ENCODE measurements at regions of chr17 and their contacts with region 1.

Region 1: DNA sequence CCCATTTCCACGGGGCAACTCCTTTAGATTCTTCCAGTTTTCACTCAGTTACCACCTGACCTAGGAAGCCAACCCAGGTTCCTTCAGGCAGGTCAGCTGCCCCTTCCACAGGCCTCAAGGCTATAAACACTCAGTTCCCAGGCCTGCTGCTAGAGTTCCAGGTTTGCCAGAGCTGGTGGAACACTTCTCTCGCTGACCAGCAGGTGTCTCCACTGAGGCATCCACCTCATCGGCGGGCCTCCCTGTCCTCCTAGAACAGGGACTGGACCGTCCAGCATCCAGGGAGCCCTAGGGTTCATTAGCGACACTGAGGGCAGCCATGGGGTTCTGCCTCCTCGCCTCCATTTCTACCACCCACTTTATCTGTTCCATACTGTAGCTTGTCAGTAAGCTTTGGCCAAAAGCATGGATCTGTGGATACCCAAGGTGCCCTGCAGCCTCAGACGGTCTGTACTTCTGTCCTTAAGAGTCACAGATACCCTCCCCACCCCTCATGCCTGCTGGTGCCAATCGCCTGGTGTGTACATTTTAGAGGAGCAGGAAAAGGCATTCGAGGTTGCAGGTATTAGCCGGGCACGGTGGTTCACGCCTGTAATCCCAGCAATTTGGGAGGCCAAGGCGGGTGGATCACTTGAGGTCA is 29.0 kb downstream of the PIMREG start:
- DNase-seq: peak; percentile 84
- ATAC-seq: peak; percentile 84
- H3K4me3 Mint-ChIP-seq: no peak overlapping the region
- H3K27ac Mint-ChIP-seq: no peak overlapping the region
- H3K4me1 Mint-ChIP-seq: no peaks in the 10 kb centered on the region
- H3K27me3 Mint-ChIP-seq: no peaks in the 10 kb centered on the region

Region 2: GRCh38 chr17:6509031-6509771 is 36.0 kb after region 1 on chr17:
- CTCF ChIA-PET with region 1: no interaction called
- POLR2A ChIA-PET with region 1: no interaction called
- intact Hi-C with region 1: no loop called
- DNase-seq: no peak
- ATAC-seq: no peak
- H3K4me3 Mint-ChIP-seq: no peak overlapping the region
- H3K27ac Mint-ChIP-seq: no peak overlapping the region
- H3K4me1 Mint-ChIP-seq: no peaks in the 10 kb centered on the region
- H3K27me3 Mint-ChIP-seq: peaks cover 3% of the 10 kb centered on the region

Region 3: DNA sequence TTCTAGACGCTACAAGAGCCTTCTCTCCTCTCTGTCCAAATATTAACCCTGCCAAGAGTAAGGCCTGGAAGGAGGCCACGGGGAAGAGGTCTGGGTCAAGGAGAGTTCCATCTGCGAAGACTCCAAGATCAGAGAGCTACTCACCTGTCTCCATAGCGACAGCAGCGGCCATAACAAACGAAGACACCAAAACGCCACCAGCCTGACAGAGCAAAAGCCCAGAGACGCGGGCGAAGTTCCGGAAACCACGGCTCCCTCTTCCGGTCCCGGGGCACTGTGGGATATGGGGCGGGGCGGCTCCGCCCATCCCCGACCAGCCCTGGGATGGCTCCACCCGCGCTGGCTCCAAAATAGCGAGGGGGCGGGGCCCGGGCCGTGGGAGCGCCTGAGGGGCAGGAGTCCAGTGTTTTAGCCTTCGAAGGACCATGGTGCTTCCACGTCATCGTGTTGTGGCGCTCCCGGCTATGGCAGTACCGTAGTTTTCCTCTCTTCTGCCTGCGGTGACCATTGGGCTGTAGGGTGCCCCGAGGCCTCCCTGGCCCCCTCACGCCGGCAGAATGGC is 178.2 kb after region 1 on chr17 and contains the starts of genes C17orf100 and MED31:
- CTCF ChIA-PET with region 1: no interaction called
- POLR2A ChIA-PET with region 1: no interaction called
- intact Hi-C with region 1: loop called (anchors 1 to 10 kb)
- DNase-seq: peak; percentile 97
- ATAC-seq: peak; percentile 95
- H3K4me3 Mint-ChIP-seq: peak within 1 kb of the TSS; percentile 98
- H3K27ac Mint-ChIP-seq: peak within 1 kb of the TSS; percentile 99
- H3K4me1 Mint-ChIP-seq: peaks cover 55% of the 10 kb centered on the region
- H3K27me3 Mint-ChIP-seq: peaks cover 2% of the 10 kb centered on the region
- total RNA-seq, gene C17orf100: 1.6 to 2.0 TPM
- total RNA-seq, gene MED31: 17.7 to 24.5 TPM

Region 4: DNA sequence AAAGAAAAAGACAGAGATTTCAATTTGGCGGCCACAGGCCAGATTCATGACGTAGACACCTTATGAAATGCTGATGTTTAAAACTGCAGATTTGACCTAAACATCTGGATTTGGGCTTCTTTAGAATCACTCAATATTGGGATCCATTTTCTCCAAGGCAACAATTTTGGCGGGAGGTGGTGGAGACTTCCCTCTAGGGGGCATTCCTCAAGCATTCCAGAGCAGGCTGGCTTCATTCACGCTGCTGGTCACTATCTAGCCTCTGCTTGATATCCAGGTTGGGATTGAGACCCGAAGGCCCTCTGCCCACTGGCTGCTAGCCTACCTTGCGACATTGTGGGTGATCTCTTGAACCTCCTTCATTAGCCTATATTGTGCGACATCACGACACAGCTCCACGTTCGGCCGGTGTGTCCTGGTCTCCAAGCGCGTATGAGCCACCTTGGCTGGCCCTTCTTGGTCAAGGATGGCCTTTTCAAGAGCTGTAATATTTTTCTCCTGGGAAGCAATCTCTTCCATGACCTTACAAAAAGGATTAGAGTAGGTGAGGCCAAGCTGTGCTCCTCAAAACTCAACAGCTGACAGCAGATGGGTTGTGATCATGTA is 327.3 kb after region 1 on chr17:
- CTCF ChIA-PET with region 1: no interaction called
- POLR2A ChIA-PET with region 1: no interaction called
- intact Hi-C with region 1: loop called in 1 of 2 experiments (anchors 5 kb)
- DNase-seq: peak; percentile 39
- ATAC-seq: no peak
- H3K4me3 Mint-ChIP-seq: no peak overlapping the region
- H3K27ac Mint-ChIP-seq: no peak overlapping the region
- H3K4me1 Mint-ChIP-seq: no peaks in the 10 kb centered on the region
- H3K27me3 Mint-ChIP-seq: peaks cover 3% of the 10 kb centered on the region